ENCODE measurements at regions of chr9 and their contacts with region 1.

Region 1: GRCh38 chr9:134455934-134456739 is 129.9 kb downstream of the RXRA start:
- DNase-seq: peak; percentile 79 to 89 (median 84)
- H3K4me3 ChIP-seq: peak overlapping the region; percentile 20
- H3K27ac ChIP-seq: peak overlapping the region; percentile 77 to 87
- H3K4me1 ChIP-seq: peaks cover 11% of the 10 kb centered on the region
- H3K27me3 ChIP-seq: no peaks in the 10 kb centered on the region
- CTCF ChIP-seq: no peak
- EP300 ChIP-seq: no peak
- POLR2A ChIP-seq: no peak

Region 2: GRCh38 chr9:134316449-134317160 is 139.5 kb before region 1 on chr9:
- intact Hi-C with region 1: no loop called
- DNase-seq: peak; percentile 64 to 82 (median 71)
- H3K4me3 ChIP-seq: no peak overlapping the region
- H3K27ac ChIP-seq: no peak overlapping the region
- H3K4me1 ChIP-seq: peaks cover 8% of the 10 kb centered on the region
- H3K27me3 ChIP-seq: no peaks in the 10 kb centered on the region
- CTCF ChIP-seq: no peak
- EP300 ChIP-seq: no peak
- POLR2A ChIP-seq: no peak

Region 3: GRCh38 chr9:134391314-134392231 is 64.6 kb before region 1 on chr9:
- intact Hi-C with region 1: no loop called
- DNase-seq: no peak
- H3K4me3 ChIP-seq: no peak overlapping the region
- H3K27ac ChIP-seq: no peak overlapping the region
- H3K4me1 ChIP-seq: peaks cover 25% of the 10 kb centered on the region
- H3K27me3 ChIP-seq: no peaks in the 10 kb centered on the region
- CTCF ChIP-seq: no peak
- EP300 ChIP-seq: no peak
- POLR2A ChIP-seq: no peak

Region 4: DNA sequence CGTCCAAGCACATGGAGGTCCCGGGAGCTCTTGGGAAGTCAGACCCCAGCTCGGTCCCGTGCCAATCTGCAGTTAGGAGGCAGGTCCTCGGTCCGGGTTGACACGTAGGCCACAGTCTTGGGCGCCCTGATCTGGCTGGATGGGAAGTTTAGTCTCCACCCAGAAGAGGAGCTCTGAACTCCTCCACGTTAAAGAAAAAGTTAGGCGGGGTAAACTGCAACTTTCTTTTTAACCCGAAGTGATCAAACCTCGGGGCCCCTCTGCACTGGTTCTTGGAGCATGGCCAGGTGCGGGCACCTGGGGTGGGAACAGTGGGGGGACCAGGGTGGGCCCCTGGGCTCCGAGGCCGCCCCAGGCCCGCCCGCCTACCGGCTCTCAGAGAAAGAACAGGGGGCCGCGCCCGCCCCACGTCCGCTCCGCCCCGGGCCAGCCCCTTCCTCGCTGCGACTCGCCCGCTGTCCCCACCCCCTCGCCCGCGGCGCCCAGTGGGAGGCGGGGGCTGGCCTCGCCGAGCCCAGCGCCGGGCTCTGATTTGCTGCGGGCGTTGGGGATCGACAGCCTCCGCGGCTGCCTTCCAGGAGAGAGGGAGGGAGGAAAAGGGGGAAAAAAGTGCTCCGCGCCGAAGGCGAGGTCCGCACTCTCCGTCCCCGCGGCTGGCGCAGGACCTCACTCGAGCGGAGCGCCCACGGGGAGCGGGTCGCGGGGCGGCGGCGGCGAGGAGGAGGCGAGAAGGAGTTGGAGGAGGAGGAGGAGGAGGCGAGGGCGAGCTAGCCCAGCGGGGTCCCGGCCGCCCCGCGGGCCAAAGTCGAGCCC is 185.2 kb after region 1 on chr9 and contains the start of gene COL5A1:
- intact Hi-C with region 1: loop called in 3 of 4 experiments (anchors 5 to 10 kb)
- DNase-seq: peak; percentile 92 to 94 (median 93)
- H3K4me3 ChIP-seq: peak within 1 kb of the TSS; percentile 86
- H3K27ac ChIP-seq: peak within 1 kb of the TSS; percentile 64 to 83
- H3K4me1 ChIP-seq: peaks cover 13% of the 10 kb centered on the region
- H3K27me3 ChIP-seq: no peaks in the 10 kb centered on the region
- CTCF ChIP-seq: peak in 2 of 3 donors; percentile 50 to 54
- EP300 ChIP-seq: no peak
- POLR2A ChIP-seq: peak; percentile 85
- total RNA-seq, gene COL5A1: 28.1 to 117 (median 58.6) TPM

Region 5: GRCh38 chr9:134689321-134690181 is 233.4 kb after region 1 on chr9:
- intact Hi-C with region 1: loop called in 1 of 4 experiments (anchors 5 kb)
- DNase-seq: peak; percentile 55 to 82 (median 79)
- H3K4me3 ChIP-seq: no peak overlapping the region
- H3K27ac ChIP-seq: no peak overlapping the region
- H3K4me1 ChIP-seq: peaks cover 5% of the 10 kb centered on the region
- H3K27me3 ChIP-seq: no peaks in the 10 kb centered on the region
- CTCF ChIP-seq: peak; percentile 53 to 82 (median 79)
- EP300 ChIP-seq: no peak
- POLR2A ChIP-seq: no peak